ENCODE measurements at regions of chr1 and their contacts with region 1.

Region 1: DNA sequence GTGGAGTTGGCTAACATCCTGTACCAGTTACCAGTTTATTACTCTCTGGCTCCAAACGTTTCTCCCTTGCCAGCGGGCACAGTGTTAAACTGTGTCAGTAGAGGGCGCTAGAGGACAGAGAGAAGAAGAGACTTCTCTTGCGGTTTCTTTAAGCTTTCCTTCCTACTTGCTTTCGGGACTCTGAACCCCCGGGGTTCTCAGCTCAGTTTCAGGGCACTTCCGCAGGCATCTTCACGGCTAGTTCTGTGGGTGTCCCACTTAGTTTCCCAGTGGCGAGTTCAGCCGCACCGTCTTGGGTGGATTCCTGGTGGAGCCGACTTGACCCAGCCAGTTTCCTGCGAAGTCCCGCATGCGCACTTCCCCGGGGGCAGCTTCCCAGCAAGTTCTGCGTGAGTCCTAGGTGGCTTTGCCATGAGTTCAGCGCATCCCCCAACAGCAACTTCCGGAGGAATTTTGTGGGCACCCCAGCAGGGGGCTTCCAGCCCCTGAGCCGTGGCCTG is 37.9 kb upstream of the BTG2 start:
- H3K4me3 ChIP-seq: peak overlapping the region; percentile 58
- H3K27ac ChIP-seq: no peak overlapping the region; the same call in 1 of the 2 replicates
- H3K4me1 ChIP-seq: no peaks in the 10 kb centered on the region
- CTCF ChIP-seq: peak; percentile 72

Region 2: DNA sequence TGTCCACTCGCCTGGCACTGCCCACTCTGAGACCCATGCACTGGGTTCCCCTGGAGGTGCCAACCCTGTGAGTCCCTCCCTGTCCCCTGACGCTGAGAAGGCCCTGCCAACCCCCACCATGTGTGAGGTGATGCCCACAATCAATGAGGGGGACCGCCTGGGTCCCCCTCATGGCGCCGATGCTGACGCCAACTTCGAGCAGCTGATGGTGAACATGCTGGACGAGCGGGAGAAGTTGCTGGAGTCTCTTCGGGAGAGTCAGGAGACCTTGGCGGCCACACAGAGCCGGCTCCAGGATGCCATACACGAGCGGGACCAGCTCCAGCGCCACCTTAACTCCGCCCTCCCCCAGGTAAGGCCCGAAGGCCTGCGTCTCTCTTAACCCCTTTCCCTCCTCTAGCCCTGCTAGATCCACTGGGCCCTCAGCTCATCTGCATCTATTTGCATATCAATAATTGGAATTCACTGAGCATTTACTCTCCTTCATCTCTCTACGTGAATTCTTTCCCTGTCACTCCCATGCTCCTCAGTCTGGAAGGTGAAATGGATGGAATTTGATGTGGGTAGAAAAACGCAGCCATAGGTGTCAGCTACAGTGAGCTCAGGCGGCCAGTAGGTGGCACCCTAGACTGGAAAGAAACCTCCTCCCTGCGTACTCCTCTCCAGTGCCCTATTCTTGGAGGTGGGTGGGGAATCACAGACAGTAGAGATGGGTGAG is 228.3 kb before region 1 on chr1:
- CTCF ChIA-PET with region 1: interaction called, 526 read pairs
- POLR2A ChIA-PET with region 1: interaction called, 16 read pairs
- H3K4me3 ChIP-seq: no peak overlapping the region
- H3K27ac ChIP-seq: no peak overlapping the region
- H3K4me1 ChIP-seq: no peaks in the 10 kb centered on the region; the same call in 1 of the 2 replicates
- CTCF ChIP-seq: peak; percentile 82

Region 3: GRCh38 chr1:203216274-203217138 is 50.9 kb before region 1 on chr1:
- CTCF ChIA-PET with region 1: interaction called, 38 read pairs
- POLR2A ChIA-PET with region 1: no interaction called
- H3K4me3 ChIP-seq: no peak overlapping the region
- H3K27ac ChIP-seq: no peak overlapping the region
- H3K4me1 ChIP-seq: no peaks in the 10 kb centered on the region
- CTCF ChIP-seq: peak; percentile 65

Region 4: DNA sequence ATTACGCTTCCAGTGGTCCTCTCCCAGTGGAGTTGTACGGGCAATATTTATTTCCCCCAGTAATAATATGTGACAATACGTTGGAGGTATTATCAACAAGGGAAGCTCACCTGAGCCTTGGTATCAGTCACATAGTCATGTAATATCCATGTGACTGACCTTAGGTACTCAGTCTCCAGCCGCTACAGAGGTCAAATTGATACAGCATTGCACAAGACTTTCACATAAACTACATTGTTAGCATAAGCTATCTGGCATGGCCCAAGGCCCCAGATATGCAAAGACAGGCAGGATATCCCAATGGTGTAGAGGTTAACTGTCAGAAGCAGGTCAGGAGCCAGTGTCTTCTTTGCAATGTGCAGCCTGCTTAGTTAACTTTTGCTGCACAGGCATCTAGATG is 22.6 kb before region 1 on chr1:
- CTCF ChIA-PET with region 1: interaction called, 31 read pairs
- POLR2A ChIA-PET with region 1: no interaction called
- H3K4me3 ChIP-seq: no peak overlapping the region
- H3K27ac ChIP-seq: no peak overlapping the region
- H3K4me1 ChIP-seq: no peaks in the 10 kb centered on the region
- CTCF ChIP-seq: no peak

Region 5: DNA sequence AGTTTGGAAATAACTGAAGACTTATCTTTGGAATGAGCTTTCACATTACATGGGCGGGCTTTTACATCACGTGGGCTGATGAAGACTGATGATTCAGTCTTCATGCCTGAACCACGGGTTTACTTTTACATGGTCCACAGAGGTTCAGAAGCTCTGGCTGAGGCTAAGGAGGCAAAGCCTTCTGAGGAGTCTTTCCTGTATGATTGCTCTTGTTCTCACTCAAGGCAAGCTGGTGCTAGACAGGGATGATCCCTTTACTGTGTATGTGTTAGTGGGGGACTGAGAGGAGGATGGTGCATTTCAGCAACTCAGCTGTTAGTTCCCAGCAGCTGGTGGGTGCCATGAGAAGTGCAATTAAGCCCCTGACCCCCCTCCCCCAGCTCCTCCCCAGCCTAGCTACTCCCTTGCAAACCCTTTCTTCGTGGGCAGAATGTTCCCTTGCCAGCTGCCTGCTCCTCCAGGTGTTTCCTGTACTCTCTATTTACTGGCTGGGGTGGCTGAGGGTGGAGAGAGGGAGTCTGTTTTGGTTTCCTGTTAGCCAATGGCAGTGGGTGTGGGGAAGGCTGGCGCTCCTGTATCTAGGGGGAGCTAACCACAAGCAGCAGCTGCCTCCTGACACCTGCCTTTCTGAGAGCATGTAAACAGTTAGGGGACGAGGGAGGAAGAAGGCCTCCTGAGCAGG is 53.3 kb after region 1 on chr1:
- CTCF ChIA-PET with region 1: interaction called, 28 read pairs
- POLR2A ChIA-PET with region 1: no interaction called
- H3K4me3 ChIP-seq: no peak overlapping the region
- H3K27ac ChIP-seq: no peak overlapping the region; the same call in 1 of the 2 replicates
- H3K4me1 ChIP-seq: peaks cover 36% of the 10 kb centered on the region
- CTCF ChIP-seq: peak; percentile 28; the same call in 1 of the 2 replicates

Region 6: DNA sequence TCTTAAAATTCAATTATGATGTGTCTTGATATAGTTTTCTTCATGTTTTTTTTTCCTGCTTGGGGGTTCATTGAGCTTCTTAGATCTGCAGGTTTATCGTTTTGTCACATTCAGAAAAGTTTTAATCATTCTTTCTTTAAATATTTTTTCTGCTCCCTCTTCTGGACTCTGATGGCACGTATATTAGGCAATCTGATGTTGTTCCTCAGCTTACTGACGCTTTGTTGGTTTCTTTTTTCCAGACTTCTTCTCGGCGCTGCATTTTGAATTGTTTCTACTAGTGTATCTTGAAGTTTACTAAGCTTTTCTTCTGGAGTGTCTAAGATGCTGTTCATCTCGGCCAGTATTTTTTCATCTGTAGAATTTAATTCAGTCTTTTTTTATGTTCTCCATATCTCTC is 128.4 kb after region 1 on chr1:
- CTCF ChIA-PET with region 1: no interaction called
- POLR2A ChIA-PET with region 1: no interaction called
- H3K4me3 ChIP-seq: no peak overlapping the region
- H3K27ac ChIP-seq: no peak overlapping the region
- H3K4me1 ChIP-seq: no peaks in the 10 kb centered on the region
- CTCF ChIP-seq: no peak

Region 7: GRCh38 chr1:203702130-203702577 is 434.8 kb after region 1 on chr1:
- CTCF ChIA-PET with region 1: interaction called, 11 read pairs
- POLR2A ChIA-PET with region 1: no interaction called
- H3K4me3 ChIP-seq: no peak overlapping the region
- H3K27ac ChIP-seq: no peak overlapping the region
- H3K4me1 ChIP-seq: no peaks in the 10 kb centered on the region
- CTCF ChIP-seq: peak; percentile 85